ENCODE measurements at regions of chr19 and their contacts with region 1.

Region 1: GRCh38 chr19:41353466-41354342 is at the start of gene TGFB1:
- DNase-seq: peak; percentile 76
- H3K4me3 ChIP-seq: peak within 1 kb of the TSS; percentile 91
- H3K27ac ChIP-seq: peak within 1 kb of the TSS; percentile 21
- H3K27me3 ChIP-seq: no peaks in the 10 kb centered on the region
- CTCF ChIP-seq: peak; percentile 87
- polyA plus RNA-seq, gene TGFB1: 4.9 and 11.2 TPM in 2 replicates

Region 2: GRCh38 chr19:41288673-41289505 is 64.8 kb before region 1 on chr19:
- CTCF ChIA-PET with region 1: no interaction called
- POLR2A ChIA-PET with region 1: no interaction called
- DNase-seq: no peak
- H3K4me3 ChIP-seq: no peak overlapping the region
- H3K27ac ChIP-seq: no peak overlapping the region
- H3K27me3 ChIP-seq: no peaks in the 10 kb centered on the region
- CTCF ChIP-seq: no peak

Region 3: DNA sequence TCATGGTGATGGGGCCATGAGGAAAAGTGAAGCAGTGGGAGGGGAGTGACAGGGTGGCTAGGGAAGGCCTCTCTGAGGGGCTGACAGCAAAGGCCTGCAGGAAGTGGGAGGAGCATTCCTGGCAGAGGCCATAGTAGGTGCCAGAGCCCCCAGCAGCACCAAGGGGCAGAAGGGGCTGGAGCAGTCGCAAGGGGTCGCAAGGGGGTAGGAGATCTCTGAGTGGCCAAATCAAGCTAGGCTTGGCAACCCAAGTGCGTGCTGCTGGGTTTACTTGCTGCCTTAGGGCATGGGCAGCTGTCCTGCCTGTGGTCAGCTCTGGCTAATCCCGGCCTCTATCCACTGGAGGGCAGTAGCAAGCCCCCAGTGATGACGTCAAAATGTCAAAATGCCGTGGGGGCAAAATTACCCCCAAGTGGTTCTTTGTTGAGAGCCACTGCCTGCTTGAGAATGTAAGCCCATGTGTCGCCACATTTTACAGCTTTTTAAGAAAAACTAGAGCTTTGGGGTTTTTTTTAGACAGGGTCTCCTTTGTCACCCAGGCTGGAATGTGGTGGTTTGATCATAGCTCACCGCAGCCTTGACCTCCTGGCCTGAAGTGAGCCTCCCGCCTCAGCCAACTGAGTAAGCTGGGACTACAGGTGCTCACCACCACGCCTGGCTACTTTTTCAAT is 32.0 kb before region 1 on chr19:
- CTCF ChIA-PET with region 1: interaction called, 14 read pairs
- POLR2A ChIA-PET with region 1: interaction called, 43 read pairs
- DNase-seq: no peak
- H3K4me3 ChIP-seq: no peak overlapping the region
- H3K27ac ChIP-seq: peak overlapping the region; percentile 100
- H3K27me3 ChIP-seq: no peaks in the 10 kb centered on the region
- CTCF ChIP-seq: peak; percentile 84

Region 4: GRCh38 chr19:41363753-41364523 is 10.2 kb after region 1 on chr19 and contains the start of gene B9D2:
- CTCF ChIA-PET with region 1: interaction called, 16 read pairs
- POLR2A ChIA-PET with region 1: interaction called, 6 read pairs
- DNase-seq: peak; percentile 94
- H3K4me3 ChIP-seq: peak within 1 kb of the TSS; percentile 93
- H3K27ac ChIP-seq: peak within 1 kb of the TSS; percentile 99
- H3K27me3 ChIP-seq: no peaks in the 10 kb centered on the region
- CTCF ChIP-seq: no peak
- polyA plus RNA-seq, gene B9D2: 3.9 and 5.1 TPM in 2 replicates

Region 5: GRCh38 chr19:41405776-41406175 is 52.1 kb after region 1 on chr19:
- CTCF ChIA-PET with region 1: no interaction called
- POLR2A ChIA-PET with region 1: no interaction called
- DNase-seq: no peak
- H3K4me3 ChIP-seq: no peak overlapping the region
- H3K27ac ChIP-seq: no peak overlapping the region
- H3K27me3 ChIP-seq: no peaks in the 10 kb centered on the region
- CTCF ChIP-seq: no peak

Region 6: DNA sequence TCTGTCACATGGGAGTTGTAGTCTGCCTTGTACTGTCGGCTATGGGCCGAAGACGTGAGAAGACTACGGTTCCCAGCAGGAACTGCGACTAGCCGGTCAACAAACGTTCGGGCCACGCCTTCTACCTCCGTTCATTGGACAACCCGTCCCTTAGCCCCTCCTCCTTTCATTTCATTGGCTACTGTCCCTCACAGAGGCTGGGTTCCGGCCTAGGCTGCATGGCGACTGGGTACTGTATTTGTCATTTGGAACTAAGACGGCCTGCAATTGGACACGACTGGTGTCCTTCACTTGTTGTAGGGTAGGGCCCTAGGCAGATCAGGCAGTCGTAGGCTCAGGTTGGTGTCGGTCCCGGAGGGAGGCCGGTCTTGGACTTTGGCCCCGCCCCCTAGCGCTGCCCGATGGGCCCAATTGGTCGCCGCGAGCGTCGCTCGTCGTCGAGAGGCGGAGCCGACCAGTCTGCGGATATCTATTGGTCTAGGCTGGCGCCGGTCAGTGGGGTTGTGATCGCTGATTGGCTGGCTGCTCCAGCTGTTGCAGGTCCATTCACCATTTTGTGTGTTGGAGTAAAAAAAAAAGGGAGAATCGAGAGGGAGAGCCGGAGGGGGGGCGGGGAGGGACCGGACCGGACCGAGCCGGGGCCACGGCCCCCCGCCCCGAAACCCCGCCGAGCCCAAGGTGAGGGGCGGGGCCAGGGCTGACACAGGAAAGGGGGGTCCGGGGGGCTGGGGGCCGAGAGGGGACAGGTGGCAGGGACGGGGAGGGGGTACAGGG is 915.2 kb after region 1 on chr19 and contains the start of gene CIC:
- CTCF ChIA-PET with region 1: no interaction called
- POLR2A ChIA-PET with region 1: no interaction called
- DNase-seq: peak; percentile 100
- H3K4me3 ChIP-seq: peak within 1 kb of the TSS; percentile 94
- H3K27ac ChIP-seq: peak within 1 kb of the TSS; percentile 98
- H3K27me3 ChIP-seq: no peaks in the 10 kb centered on the region
- CTCF ChIP-seq: no peak
- polyA plus RNA-seq, gene CIC: 2.9 and 4.2 TPM in 2 replicates